Motor neuron (in vitro differentiated cells): ENCODE measurements at regions of chr11 and their contacts with region 1.

Region 1: DNA sequence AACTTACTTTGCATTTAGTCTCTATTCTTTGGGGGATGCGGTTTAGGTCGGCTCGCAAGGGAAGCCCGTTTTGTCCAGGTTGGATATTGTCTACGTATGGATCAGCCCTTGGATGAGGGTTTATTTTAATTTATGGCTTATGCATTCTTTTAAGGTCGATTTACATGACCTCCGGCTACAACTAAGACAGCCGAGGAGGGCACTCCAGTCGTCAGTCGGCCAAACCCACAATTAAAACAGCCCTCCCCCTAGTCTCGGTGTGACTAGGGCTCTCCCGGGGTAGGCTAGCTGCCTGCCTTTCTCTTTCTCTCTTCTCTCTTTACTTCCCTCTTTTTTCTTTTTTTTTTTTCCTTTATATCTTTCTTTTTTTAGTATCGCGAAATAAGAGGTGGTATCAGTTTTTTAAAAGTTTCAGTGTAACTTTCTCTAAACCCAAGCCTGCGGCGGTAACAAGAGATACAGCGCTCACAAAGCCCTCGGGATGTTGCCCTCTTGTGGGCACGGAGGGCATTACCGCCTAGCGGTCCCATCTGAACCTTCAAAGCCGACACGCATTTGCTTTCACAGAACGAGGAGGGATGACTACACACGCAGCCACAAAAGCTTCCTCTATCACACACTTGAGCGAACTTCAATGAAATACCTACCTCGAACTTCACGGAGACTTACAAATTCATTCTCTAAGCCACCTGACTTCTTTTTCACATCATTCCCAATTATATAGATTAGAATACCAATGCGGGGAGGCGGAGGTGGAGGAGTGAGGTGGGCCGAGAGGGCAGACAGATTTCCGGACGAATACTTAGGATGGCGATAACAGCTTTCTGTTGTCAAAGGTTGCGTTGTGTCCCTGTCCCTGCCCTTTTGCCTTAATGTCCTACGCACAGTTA is 132.3 kb upstream of the C11orf58 start:
- ATAC-seq: peak; percentile 43 to 75 (median 60)
- H3K4me3 ChIP-seq: peak overlapping the region; percentile 51 to 68 (median 57)
- H3K27ac ChIP-seq: peak overlapping the region in 1 of 2 donors; percentile 62
- H3K4me1 ChIP-seq: peaks cover 0 to 10% of the 10 kb centered on the region in 2 donors

Region 2: DNA sequence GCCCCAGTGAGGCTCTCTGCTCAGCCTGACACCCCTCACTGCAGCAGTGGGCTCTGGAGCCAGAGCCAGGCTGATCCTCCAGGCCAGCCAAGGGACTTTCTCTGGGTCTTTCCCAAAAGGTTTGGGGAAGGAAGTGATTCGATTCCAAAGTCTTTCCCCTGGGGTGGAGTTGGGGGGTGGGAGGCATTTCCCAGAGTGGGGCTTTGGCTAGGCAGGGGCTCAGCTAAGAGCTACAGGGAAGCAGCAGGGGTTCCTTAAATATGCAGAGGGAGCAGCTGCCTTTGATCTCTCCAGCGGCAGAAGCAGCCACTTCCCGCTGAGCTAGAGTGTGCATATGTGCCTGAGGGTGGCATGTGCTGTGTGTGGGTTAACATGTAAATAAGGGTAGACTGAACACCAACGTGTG is 1298.5 kb before region 1 on chr11:
- in situ Hi-C with region 1: loop called in 1 of 9 experiments (anchors 25 kb)
- ATAC-seq: peak in 7 of 8 experiments; percentile 14 to 99 (median 60)
- H3K4me3 ChIP-seq: no peak overlapping the region
- H3K27ac ChIP-seq: no peak overlapping the region
- H3K4me1 ChIP-seq: no peaks in the 10 kb centered on the region

Region 3: DNA sequence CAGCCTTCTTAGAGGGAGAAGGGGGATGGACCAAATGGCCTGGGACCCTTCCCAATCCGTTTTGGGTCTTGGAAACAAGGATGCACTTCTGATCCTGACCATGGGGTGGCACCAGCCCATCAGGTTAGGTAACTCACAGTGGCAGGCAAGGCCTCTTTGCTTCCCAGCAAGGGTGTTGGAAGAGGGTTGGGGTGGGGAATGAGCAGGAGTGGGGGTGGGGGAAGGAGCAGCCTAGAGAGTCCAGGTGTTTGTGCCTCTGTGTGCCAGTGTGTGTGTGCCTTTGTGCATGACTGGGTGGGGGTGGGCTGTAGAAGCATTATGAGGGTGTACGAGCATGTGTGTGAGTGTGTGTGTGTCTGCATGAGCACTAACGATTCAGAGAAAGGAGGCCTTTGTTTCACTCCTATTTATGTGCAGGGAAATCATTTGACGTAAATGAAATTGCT is 1278.3 kb before region 1 on chr11:
- in situ Hi-C with region 1: loop called in 3 of 9 experiments (anchors 25 kb)
- ATAC-seq: peak; percentile 73 to 96 (median 80)
- H3K4me3 ChIP-seq: no peak overlapping the region
- H3K27ac ChIP-seq: no peak overlapping the region
- H3K4me1 ChIP-seq: no peaks in the 10 kb centered on the region

Region 4: DNA sequence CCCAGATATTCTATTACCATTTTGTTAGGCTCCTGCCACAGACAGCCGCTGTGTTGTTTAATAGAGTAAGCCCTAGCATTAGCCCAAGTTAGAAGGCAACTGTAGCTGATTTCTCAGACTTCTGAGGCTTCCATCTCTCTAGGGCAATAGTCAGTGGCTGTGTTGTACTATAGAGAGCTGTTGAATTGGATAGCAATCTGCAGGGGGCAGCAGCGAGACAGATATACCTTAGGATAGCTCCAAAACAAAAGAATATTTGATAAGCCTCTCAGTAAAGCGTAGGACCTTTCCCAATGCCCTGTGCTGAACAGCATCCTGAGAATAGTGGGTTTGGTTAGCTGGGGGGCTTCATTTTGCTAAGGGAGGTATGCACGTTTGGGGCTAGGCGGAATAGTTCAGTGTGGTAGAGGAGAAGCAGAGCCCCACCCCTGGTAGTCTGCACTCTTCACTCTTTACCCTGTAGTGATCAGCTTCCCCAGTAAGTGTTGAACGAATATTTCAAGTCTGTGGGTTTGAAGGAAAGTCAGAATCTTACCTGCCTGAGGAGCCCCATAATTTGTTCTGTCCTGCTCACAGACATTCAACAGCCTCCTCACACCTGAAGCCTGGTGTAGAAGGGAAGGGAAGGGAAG is 976.3 kb before region 1 on chr11:
- in situ Hi-C with region 1: loop called in 3 of 9 experiments (anchors 25 kb)
- ATAC-seq: peak in 4 of 8 experiments; percentile 47 to 90 (median 68)
- H3K4me3 ChIP-seq: no peak overlapping the region
- H3K27ac ChIP-seq: no peak overlapping the region
- H3K4me1 ChIP-seq: no peaks in the 10 kb centered on the region

Region 5: DNA sequence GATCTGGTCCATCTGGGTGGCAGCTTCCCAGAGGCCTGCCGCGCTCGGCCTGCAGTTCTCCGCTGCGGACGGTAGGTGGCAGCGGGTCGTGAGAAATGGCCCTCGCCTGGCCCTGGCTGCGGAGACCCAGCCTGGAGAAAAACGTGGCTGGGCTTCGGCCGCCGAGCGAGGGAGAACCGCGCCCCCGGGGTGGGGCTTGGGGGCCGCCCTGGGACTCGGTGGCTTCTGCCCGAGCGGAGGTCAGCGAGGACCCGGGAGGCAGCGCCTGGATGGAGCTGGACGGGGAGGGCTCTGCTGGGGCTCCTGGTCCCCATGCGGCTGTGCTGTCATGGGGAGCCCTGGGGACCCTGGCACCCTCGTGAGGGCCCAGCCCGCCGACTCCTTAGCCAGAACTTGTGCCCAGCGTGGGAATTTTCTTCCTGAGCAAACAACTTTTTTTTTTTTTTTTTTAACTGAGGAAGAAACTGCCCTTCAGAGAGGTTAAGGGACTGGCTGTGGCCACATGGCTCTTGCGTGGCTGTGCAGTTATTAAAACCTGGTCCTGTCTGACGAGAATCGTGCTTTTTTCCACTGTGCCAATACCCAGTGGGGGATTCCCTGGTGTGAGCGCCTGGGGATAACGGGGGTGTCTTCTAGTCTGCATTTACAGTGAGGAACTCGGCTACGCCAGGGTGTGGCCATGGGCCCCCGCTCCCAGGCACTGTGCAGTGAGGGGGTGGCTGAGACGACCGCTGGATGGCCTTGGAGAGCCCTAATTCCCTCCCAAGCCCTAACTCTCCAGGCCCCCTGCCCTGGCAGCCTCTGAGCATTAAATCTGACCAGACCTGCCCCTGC is 955.8 kb before region 1 on chr11:
- in situ Hi-C with region 1: loop called in 6 of 9 experiments (anchors 10 to 25 kb)
- ATAC-seq: peak; percentile 94 to 99 (median 96)
- H3K4me3 ChIP-seq: peak overlapping the region in 4 of 5 donors; percentile 3 to 23 (median 10)
- H3K27ac ChIP-seq: no peak overlapping the region
- H3K4me1 ChIP-seq: peaks cover 18 to 21% of the 10 kb centered on the region in 2 donors

Region 6: DNA sequence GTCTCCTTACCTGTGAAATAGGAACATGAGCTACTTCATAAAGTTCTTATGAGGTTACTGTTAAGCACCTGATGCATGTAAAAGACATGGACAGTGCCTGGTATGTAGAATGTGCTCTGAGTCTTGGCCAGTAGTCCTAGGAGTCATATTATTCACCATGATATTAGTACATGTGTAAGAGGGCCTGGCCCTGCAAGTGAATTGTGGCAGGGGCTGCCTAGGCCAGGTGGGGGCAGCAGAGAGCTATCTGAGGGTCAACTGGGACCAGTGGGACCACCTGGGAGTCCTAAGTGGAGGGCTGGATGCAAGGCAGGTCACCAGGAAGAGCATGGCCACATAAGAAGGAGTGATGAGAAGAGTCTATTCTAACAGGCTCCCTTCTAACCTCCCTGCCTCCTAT is 779.3 kb before region 1 on chr11:
- in situ Hi-C with region 1: loop called in 3 of 9 experiments (anchors 25 kb)
- ATAC-seq: peak in 4 of 8 experiments; percentile 38 to 93 (median 64)
- H3K4me3 ChIP-seq: no peak overlapping the region
- H3K27ac ChIP-seq: no peak overlapping the region
- H3K4me1 ChIP-seq: no peaks in the 10 kb centered on the region

Region 7: GRCh38 chr11:16204261-16204660 is 401.9 kb before region 1 on chr11:
- in situ Hi-C with region 1: no loop called
- ATAC-seq: no peak
- H3K4me3 ChIP-seq: no peak overlapping the region
- H3K27ac ChIP-seq: no peak overlapping the region
- H3K4me1 ChIP-seq: no peaks in the 10 kb centered on the region